ENCODE measurements at regions of chr4 and their contacts with region 1.

Region 1: GRCh38 chr4:153127760-153128494 is 76.3 kb upstream of the TRIM2 start:
- DNase-seq: peak; percentile 86
- H3K4me3 ChIP-seq: peak overlapping the region in 1 of 3 experiments; percentile 31
- H3K27ac ChIP-seq: no peak overlapping the region
- H3K4me1 ChIP-seq: no peaks in the 10 kb centered on the region
- H3K27me3 ChIP-seq: no peaks in the 10 kb centered on the region
- CTCF ChIP-seq: peak; percentile 77 to 82
- POLR2A ChIP-seq: no peak

Region 2: DNA sequence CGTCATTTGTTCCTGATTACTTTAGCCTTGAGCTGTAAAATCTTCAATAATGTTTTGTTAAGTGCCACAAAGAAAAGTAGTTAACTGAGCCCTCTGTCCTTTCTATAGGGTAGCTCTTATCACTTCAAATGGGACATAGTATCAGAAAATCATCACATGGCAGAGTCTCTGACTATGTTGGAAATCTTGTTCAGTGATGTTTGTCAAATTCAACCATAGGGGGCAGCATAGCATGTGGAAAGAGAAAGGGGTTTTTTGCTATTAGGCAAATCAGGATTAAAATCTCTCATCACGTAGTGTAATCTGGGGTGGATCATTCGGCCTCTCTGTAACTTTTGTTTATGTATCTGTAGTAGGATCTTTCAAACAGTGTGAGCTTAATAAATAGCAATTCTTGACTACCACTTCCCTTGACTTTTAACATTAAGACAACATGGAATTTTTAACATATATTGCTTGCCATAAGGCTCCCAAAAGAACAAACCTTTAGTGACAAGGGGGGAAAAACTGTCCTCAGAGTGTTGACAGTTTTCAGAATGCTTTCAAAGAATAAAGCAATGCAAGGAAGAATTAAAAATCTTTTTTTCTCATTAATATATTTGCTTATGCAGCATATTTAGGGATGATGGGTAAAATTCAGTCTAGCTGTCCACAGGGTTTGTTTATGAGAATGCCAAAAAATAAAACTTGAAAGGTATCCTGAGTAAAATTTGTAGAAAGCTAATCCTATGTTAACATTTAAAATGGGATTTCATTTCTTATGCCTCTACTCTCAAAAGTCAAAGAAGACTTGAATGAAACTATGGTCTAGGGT is 719.2 kb before region 1 on chr4:
- CTCF ChIA-PET with region 1: interaction called, 8 read pairs
- POLR2A ChIA-PET with region 1: no interaction called
- dilution Hi-C with region 1: no loop called
- intact Hi-C with region 1: loop called (anchors 5 kb)
- DNase-seq: peak; percentile 42
- H3K4me3 ChIP-seq: no peak overlapping the region
- H3K27ac ChIP-seq: no peak overlapping the region
- H3K4me1 ChIP-seq: no peaks in the 10 kb centered on the region
- H3K27me3 ChIP-seq: no peaks in the 10 kb centered on the region
- CTCF ChIP-seq: peak; percentile 43 to 50
- POLR2A ChIP-seq: no peak

Region 3: GRCh38 chr4:152640058-152640833 is 487.7 kb before region 1 on chr4:
- CTCF ChIA-PET with region 1: interaction called, 4 read pairs
- POLR2A ChIA-PET with region 1: no interaction called
- dilution Hi-C with region 1: no loop called
- intact Hi-C with region 1: loop called (anchors 5 kb)
- DNase-seq: peak; percentile 30
- H3K4me3 ChIP-seq: no peak overlapping the region
- H3K27ac ChIP-seq: no peak overlapping the region
- H3K4me1 ChIP-seq: no peaks in the 10 kb centered on the region
- H3K27me3 ChIP-seq: no peaks in the 10 kb centered on the region
- CTCF ChIP-seq: peak in 1 of 2 donors; percentile 29
- POLR2A ChIP-seq: no peak

Region 4: DNA sequence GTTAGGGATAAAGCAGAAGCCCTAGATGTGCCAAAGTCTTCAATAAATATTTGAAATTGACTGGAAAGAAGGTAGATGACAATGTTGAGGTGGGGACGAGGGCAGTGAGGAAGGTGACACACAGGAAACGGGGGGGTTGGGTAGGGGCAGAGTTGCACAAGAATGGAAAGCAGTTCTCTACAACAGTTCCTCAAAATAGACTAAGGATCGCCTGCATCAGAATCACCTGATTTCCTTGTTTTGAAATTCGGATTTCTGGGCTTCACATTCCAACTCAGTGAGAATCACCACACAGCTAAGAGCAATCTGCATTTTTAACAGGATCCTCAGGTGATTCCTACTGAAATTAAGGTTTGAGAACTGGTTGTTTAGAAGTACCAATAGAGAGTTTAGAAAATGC is 277.6 kb before region 1 on chr4:
- CTCF ChIA-PET with region 1: interaction called, 60 read pairs
- POLR2A ChIA-PET with region 1: interaction called, 3 read pairs
- dilution Hi-C with region 1: no loop called
- intact Hi-C with region 1: loop called (anchors 1 kb)
- DNase-seq: no peak
- H3K4me3 ChIP-seq: no peak overlapping the region
- H3K27ac ChIP-seq: no peak overlapping the region
- H3K4me1 ChIP-seq: peaks cover 7% of the 10 kb centered on the region
- H3K27me3 ChIP-seq: no peaks in the 10 kb centered on the region
- CTCF ChIP-seq: no peak
- POLR2A ChIP-seq: no peak

Region 5: DNA sequence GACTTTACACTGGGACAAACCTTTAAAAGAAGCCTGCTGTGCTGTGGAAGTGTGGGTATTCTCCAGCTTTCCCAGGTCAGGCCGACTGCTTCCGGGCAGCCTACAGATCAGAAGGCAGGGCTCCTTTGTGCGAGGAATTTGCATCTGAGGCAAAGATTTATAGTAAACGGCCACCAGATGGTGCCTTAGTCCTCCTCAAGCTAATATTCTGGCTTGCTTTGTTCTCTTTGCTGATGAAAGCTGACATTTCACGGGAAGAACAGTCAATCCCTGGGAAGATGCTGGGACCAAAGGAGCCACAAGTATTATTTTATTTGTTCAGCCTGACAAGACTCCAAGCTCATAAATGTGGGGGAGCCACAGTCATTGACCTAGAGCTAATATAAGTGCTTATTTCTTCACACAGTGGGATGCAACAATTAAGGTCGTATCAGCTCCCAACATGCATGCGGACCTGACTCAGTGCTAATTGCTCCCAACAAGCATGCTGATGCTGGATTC is 44.4 kb before region 1 on chr4:
- CTCF ChIA-PET with region 1: interaction called, 138 read pairs
- POLR2A ChIA-PET with region 1: no interaction called
- dilution Hi-C with region 1: no loop called
- intact Hi-C with region 1: loop called (anchors 1 kb)
- DNase-seq: peak; percentile 75
- H3K4me3 ChIP-seq: no peak overlapping the region
- H3K27ac ChIP-seq: no peak overlapping the region
- H3K4me1 ChIP-seq: no peaks in the 10 kb centered on the region
- H3K27me3 ChIP-seq: peaks cover 4 to 7% of the 10 kb centered on the region in 2 experiments
- CTCF ChIP-seq: peak; percentile 59 to 66
- POLR2A ChIP-seq: no peak

Region 6: GRCh38 chr4:153107246-153107645 is 20.7 kb before region 1 on chr4:
- CTCF ChIA-PET with region 1: interaction called, 15 read pairs
- POLR2A ChIA-PET with region 1: no interaction called
- dilution Hi-C with region 1: no loop called
- intact Hi-C with region 1: no loop called
- DNase-seq: no peak
- H3K4me3 ChIP-seq: no peak overlapping the region
- H3K27ac ChIP-seq: no peak overlapping the region
- H3K4me1 ChIP-seq: no peaks in the 10 kb centered on the region
- H3K27me3 ChIP-seq: peaks cover 0 to 5% of the 10 kb centered on the region in 2 experiments
- CTCF ChIP-seq: no peak
- POLR2A ChIP-seq: no peak